H1 (cell line): ENCODE measurements at regions of chr6 and their contacts with region 1.

Region 1: GRCh38 chr6:8131256-8131897 is 29.0 kb upstream of the EEF1E1 start:
- DNase-seq: peak; percentile 31 to 78
- H3K4me3 ChIP-seq: no peak overlapping the region
- H3K27ac ChIP-seq: no peak overlapping the region
- H3K4me1 ChIP-seq: no peaks in the 10 kb centered on the region
- H3K27me3 ChIP-seq: no peaks in the 10 kb centered on the region
- CTCF ChIP-seq: peak; percentile 30 to 83 (median 73)
- EP300 ChIP-seq: no peak
- POLR2A ChIP-seq: no peak
- RAD21 ChIP-seq: peak; percentile 96 to 97

Region 2: GRCh38 chr6:8017276-8017701 is 114.1 kb before region 1 on chr6:
- CTCF ChIA-PET with region 1: no interaction called
- POLR2A ChIA-PET with region 1: no interaction called
- DNase-seq: no peak
- H3K4me3 ChIP-seq: no peak overlapping the region
- H3K27ac ChIP-seq: no peak overlapping the region
- H3K4me1 ChIP-seq: peaks cover 0 to 8% (median 6%) of the 10 kb centered on the region in 4 experiments; a peak in 4 of 7 replicates
- H3K27me3 ChIP-seq: no peaks in the 10 kb centered on the region
- CTCF ChIP-seq: no peak
- EP300 ChIP-seq: no peak
- POLR2A ChIP-seq: no peak
- RAD21 ChIP-seq: no peak

Region 3: DNA sequence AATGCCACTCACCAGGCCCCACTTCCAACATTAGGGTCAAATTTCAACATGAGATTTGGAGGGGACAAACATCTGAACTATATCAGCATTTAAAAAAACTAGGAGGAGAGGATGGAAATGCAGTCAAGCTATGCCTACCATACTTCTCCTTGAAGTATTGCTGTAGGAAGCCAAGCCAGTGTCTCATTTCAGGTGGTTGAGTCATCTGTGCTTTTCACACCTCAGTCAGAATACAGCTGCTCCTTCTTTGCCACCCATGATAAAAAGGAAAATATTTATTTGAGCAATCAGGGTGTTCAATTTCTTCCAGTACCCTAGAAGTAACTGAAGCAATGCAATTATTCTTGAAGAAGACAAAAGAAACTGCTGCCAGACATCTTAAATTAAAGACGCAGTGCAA is 18.0 kb after region 1 on chr6:
- CTCF ChIA-PET with region 1: interaction called, 16 read pairs
- POLR2A ChIA-PET with region 1: no interaction called
- DNase-seq: no peak
- H3K4me3 ChIP-seq: no peak overlapping the region
- H3K27ac ChIP-seq: no peak overlapping the region
- H3K4me1 ChIP-seq: peaks cover 0 to 4% (median 2%) of the 10 kb centered on the region in 4 experiments; a peak in 2 of 7 replicates
- H3K27me3 ChIP-seq: no peaks in the 10 kb centered on the region
- CTCF ChIP-seq: no peak
- EP300 ChIP-seq: no peak
- POLR2A ChIP-seq: no peak
- RAD21 ChIP-seq: no peak

Region 4: GRCh38 chr6:8170245-8170644 is 38.9 kb after region 1 on chr6:
- CTCF ChIA-PET with region 1: interaction called, 26 read pairs
- POLR2A ChIA-PET with region 1: no interaction called
- DNase-seq: no peak
- H3K4me3 ChIP-seq: no peak overlapping the region
- H3K27ac ChIP-seq: no peak overlapping the region
- H3K4me1 ChIP-seq: peaks cover 0 to 2% (median 0%) of the 10 kb centered on the region in 4 experiments; a peak in 2 of 7 replicates
- H3K27me3 ChIP-seq: no peaks in the 10 kb centered on the region
- CTCF ChIP-seq: peak; percentile 6 to 48 (median 28)
- EP300 ChIP-seq: no peak
- POLR2A ChIP-seq: no peak
- RAD21 ChIP-seq: peak; percentile 4 to 34; a peak in 2 of 4 replicates

Region 5: GRCh38 chr6:8195040-8195713 is 63.8 kb after region 1 on chr6:
- CTCF ChIA-PET with region 1: interaction called, 16 read pairs
- POLR2A ChIA-PET with region 1: no interaction called
- DNase-seq: no peak
- H3K4me3 ChIP-seq: no peak overlapping the region
- H3K27ac ChIP-seq: no peak overlapping the region
- H3K4me1 ChIP-seq: peaks cover 1 to 11% (median 7%) of the 10 kb centered on the region in 4 experiments; a peak in 5 of 7 replicates
- H3K27me3 ChIP-seq: no peaks in the 10 kb centered on the region
- CTCF ChIP-seq: peak in 2 of 3 experiments; percentile 29 to 45; a peak in 2 of 4 replicates
- EP300 ChIP-seq: no peak
- POLR2A ChIP-seq: no peak
- RAD21 ChIP-seq: peak; percentile 39 to 56

Region 6: DNA sequence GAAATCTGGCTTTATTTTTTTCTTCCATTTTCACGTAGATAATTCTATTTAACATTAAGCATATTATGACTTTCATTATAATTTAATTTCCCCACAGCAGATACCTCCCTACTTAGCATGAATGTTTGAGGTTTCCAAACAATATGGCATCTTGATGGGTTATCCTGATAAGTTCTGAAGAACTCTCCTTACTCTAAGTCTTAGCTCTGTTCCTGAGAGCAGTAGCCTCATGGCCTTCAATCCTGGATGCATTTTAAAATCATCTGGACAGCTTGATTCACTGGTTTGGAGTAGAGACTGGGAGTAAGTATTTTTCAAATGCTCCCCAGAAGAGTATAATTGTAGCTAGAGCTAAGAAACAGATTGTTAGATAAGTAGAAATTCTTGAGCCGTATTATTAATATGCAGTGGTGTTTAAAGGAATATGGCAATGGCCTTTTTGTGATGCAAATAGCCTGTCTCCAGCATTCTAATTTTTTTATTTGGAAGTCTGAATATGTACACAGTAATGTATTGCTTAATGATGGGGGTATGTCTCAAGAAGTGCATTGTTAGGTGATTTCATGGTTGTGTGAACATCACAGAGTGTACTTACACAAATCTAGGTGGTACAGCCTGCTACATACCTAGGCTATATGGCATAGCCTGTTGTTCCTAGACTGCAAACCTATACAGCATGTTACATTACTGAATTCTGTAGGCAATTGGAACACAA is 81.5 kb after region 1 on chr6:
- CTCF ChIA-PET with region 1: interaction called, 191 read pairs
- POLR2A ChIA-PET with region 1: no interaction called
- DNase-seq: peak in 1 of 2 experiments; percentile 1
- H3K4me3 ChIP-seq: no peak overlapping the region
- H3K27ac ChIP-seq: no peak overlapping the region
- H3K4me1 ChIP-seq: no peaks in the 10 kb centered on the region
- H3K27me3 ChIP-seq: no peaks in the 10 kb centered on the region
- CTCF ChIP-seq: no peak
- EP300 ChIP-seq: no peak
- POLR2A ChIP-seq: no peak
- RAD21 ChIP-seq: no peak